ENCODE measurements at regions of chr17 and their contacts with region 1.

Region 1: DNA sequence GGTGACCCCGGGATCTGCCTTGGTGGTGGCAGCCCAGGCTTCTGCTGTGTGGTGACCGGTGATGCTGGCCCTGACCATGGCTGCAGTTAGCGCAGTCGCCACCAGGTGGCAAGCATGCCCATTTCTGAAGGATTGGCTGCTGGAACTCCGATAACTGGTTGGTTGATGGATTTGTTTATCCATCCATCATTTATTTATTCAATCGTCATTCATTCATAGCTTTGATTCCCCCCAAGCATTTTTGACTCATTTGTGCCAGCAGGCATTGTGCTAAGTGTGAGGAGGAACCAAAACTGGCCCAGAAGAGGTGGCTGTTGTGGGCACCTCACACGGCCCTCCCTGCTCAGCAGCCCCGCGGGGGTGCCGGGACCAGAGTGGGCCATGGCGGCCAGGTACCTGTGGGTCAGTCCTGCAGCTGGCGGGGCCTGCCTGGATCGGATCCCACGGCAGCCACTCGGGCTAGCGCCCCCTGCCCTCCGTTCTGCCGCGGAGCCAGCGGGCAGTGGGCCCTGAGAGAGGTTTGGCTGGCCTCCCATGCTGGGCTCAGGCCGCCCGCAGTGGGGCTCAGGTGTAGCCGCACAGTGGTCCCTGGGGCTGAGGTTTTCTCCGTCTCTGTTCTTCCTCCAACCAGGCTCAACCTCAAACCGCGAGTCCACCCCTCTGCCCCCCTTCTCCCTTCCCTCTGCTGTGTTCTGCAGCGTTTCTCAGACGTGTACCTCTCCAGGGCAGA is 28.8 kb upstream of the ITGA3 start:
- DNase-seq: peak; percentile 88
- ATAC-seq: peak; percentile 79

Region 2: DNA sequence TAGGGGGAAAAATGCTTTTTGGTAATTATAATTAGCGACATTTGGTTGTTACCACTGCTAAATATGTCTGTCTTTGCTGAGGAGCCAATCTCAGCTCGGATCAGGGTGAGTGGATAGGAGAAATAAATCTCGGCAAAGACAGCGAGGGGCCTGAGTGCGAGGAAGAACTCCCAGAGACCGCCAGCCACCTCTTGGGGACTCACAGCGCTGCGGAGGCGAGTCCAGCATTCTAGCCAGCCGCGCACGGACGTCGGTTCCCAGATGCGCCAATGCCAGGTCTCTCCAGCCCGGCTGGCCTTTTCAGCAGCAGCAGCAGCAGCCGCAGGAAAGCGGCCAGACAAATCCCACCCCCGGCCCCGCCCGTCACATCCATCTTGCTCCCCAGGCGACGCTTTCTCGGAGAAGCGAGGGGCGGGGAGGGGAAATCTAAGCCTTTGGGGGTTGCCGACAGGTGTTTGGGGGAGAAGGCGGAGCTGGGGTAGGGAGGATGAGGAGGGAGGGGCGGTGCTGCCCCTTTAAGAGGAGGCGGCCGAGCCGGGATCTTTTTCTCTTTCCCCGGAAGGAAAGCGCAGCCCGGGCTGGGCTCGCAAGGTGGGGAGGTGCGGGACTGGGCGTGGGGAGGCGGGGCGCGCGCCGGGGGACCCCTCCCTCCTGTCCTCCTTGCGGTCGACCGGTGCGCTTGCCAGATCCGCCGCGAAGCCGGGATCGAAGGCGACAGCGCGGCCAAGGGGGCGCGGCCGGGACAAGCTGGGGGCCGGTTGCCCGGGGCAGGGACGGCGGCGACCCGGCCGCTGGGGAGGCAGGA is 28.6 kb after region 1 on chr17 and contains the start of gene ITGA3:
- intact Hi-C with region 1: loop called (anchors 1 kb)
- DNase-seq: peak; percentile 84
- ATAC-seq: peak; percentile 64
- total RNA-seq, gene ITGA3: 16.4 TPM

Region 3: GRCh38 chr17:50087246-50087911 is 60.3 kb after region 1 on chr17:
- intact Hi-C with region 1: loop called (anchors 1 kb)
- DNase-seq: peak; percentile 87
- ATAC-seq: peak; percentile 84

Region 4: DNA sequence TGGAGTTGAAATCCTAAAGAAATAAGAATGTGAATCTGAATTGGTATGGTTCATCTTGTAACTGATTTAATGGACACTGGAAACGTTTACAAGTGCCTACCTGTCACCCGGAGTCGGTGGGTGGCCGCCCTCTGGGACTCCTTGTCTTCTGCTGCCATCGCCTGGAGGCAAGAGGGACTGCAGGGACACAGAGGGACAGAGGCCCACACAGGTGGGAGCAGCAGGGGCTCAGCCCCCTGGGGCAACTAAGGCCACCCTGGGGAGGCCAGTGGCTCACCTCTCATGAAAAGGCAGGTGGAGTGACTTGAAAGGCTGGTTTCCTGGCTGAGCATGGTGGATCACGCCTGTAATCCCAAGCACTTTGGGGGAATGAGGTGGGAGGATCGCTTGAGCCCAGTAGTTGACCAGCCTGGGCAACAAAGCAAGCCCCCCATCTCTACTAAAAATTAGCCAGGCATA is 270.4 kb after region 1 on chr17:
- intact Hi-C with region 1: loop called (anchors 10 kb)
- DNase-seq: peak; percentile 88
- ATAC-seq: peak; percentile 86

Measured in Right ventricle myocardium inferior (tissue), 1 donor.